ENCODE measurements at regions of chr11 and their contacts with region 1.

Region 1: GRCh38 chr11:32323814-32324130 is 111.6 kb downstream of the WT1 start:
- DNase-seq: no peak
- ATAC-seq: no peak
- H3K4me3 ChIP-seq: no peak overlapping the region
- H3K27ac ChIP-seq: no peak overlapping the region
- H3K4me1 ChIP-seq: peaks cover 7% of the 10 kb centered on the region
- H3K27me3 ChIP-seq: no peaks in the 10 kb centered on the region
- CTCF ChIP-seq: no peak

Region 2: GRCh38 chr11:32244453-32244852 is 79.3 kb before region 1 on chr11:
- CTCF ChIA-PET with region 1: interaction called, 11 read pairs
- POLR2A ChIA-PET with region 1: no interaction called
- intact Hi-C with region 1: no loop called
- DNase-seq: no peak
- ATAC-seq: no peak
- H3K4me3 ChIP-seq: no peak overlapping the region
- H3K27ac ChIP-seq: no peak overlapping the region
- H3K4me1 ChIP-seq: no peaks in the 10 kb centered on the region
- H3K27me3 ChIP-seq: 0 out of 2 replicates have a peak, but pooled peaks cover 6% of the 10 kb centered on the region
- CTCF ChIP-seq: no peak

Region 3: GRCh38 chr11:32353870-32354269 is 30.1 kb after region 1 on chr11:
- CTCF ChIA-PET with region 1: interaction called, 11 read pairs
- POLR2A ChIA-PET with region 1: no interaction called
- intact Hi-C with region 1: no loop called
- DNase-seq: no peak
- ATAC-seq: no peak
- H3K4me3 ChIP-seq: no peak overlapping the region
- H3K27ac ChIP-seq: no peak overlapping the region
- H3K4me1 ChIP-seq: no peaks in the 10 kb centered on the region
- H3K27me3 ChIP-seq: no peaks in the 10 kb centered on the region
- CTCF ChIP-seq: no peak